Dorsolateral prefrontal cortex (tissue), 120 donors: ENCODE measurements at regions of chr6 and their contacts with region 1.

Region 1: GRCh38 chr6:22764496-22764895 is 195.1 kb downstream of the HDGFL1 start:
- DNase-seq: no peak
- H3K4me3 ChIP-seq: no peak overlapping the region
- H3K27ac ChIP-seq: no peak overlapping the region
- H3K27me3 ChIP-seq: no peaks in the 10 kb centered on the region
- CTCF ChIP-seq: no peak

Region 2: GRCh38 chr6:22828179-22829062 is 63.9 kb after region 1 on chr6:
- intact Hi-C with region 1: no loop called
- DNase-seq: no peak
- H3K4me3 ChIP-seq: peak overlapping the region in 2 of 59 donors; percentile 9 to 10
- H3K27ac ChIP-seq: no peak overlapping the region
- H3K27me3 ChIP-seq: no peaks in the 10 kb centered on the region
- CTCF ChIP-seq: peak in 54 of 56 donors; percentile 11 to 68 (median 48)

Region 3: DNA sequence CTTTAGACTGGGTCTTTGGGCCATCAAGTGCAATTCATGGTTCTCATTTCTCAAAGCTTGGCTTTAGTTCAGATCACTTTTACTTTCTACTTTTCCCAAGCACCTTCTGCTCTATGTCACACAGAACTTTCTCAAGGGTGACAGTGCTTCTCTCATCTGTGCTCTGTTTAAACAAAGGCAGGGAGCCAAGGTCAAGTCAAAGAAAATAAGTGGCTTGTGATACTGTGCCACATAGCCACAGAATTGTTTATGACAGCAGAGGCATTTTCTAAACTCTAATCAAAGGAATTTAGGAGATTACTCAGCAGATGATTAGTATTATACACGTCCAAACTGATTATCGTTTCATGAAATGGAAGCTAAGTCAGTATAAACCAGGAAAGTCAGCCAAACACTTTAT is 152.8 kb after region 1 on chr6:
- intact Hi-C with region 1: no loop called
- DNase-seq: no peak
- H3K4me3 ChIP-seq: no peak overlapping the region
- H3K27ac ChIP-seq: no peak overlapping the region
- H3K27me3 ChIP-seq: peaks cover 0 to 2% (median 0%) of the 10 kb centered on the region in 45 donors
- CTCF ChIP-seq: no peak

Region 4: DNA sequence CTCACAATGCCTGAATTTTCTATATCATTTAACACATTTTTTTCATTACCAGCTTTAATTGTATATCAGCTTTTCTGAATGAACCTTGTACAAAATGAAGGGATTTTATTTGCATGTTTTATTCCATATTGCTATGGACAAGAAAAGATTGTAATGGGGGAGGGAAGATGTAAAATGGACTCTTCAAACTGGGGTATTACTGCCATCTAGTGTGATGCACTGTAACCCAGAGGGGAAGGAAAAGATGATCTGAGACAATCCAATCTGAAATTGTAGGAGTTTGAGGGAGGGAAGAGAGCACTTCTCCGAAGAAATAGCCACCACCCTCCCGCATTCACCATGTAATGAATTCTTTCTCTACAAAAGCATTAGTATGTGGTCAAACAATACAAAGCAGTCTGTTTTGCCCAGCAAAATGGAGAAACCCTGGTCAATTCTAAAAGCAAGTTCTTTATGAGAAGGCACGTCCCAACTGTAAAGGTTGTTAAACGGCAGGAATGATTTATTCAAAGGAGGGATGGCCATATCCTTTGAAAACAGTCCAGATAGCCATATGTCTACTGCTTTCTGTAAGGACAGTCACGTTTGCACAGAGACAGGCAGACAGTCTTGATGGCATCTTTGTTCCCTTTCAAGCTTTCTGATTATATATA is 682.0 kb after region 1 on chr6:
- intact Hi-C with region 1: loop called in 1 of 2 experiments (anchors 10 kb)
- DNase-seq: peak in 1 of 10 donors; percentile 17
- H3K4me3 ChIP-seq: peak overlapping the region in 36 of 59 donors; percentile 2 to 53 (median 30)
- H3K27ac ChIP-seq: peak overlapping the region in 5 of 59 donors; percentile 8 to 49 (median 29)
- H3K27me3 ChIP-seq: no peaks in the 10 kb centered on the region
- CTCF ChIP-seq: peak; percentile 37 to 87 (median 72)